Activated CD4-positive, alpha-beta T cell treated with anti-CD3 and anti-CD28 coated beads for 36 hours (primary cell): ENCODE measurements at regions of chr2 and their contacts with region 1.

Region 1: DNA sequence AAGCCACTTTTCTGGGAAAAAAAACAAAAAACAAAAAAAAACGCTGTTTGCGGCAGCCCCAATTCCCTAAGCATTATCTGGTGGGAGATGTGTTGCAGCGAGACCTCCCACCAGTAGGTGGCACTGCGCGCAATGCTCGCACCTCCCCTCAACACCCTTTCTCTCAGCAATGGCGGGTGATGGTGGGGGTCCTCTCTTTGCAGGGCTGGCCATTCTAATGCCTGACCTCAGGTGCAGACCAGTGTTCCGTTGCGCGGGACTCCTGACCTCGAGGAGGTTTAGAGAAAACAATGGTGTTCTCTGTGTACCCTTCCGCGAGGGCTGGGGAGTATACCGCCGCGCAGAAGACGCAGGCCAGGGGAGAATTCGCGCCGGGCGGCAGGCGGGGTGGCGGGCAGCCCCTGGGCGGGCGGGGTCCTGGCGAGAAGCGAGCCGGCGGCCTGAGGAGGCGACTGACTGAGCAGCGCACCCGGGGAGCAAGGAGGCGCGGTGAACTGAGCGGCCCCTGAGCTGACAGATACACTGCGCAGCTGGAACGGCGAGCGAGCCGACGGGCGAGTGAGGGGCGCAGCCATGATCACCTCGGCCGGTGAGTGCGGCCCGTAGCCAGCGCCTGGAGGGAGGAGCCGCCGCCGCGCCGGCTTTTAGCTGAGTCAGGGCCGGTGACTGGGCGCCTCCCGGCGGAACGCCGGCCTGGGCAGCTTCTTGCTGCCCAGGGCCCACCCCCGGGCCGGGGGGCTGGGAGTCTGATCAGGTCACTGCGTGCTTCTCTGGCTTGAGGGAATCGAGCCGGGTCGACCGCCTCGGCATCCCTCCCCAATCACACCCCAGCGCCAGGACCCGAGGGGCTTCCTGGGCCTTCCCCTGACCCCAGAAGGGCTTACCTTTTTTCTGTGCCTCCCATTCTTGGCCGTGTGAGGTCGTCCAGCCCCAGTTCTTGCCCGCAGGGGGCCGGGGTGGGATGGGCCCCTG is at the start of gene PSMD1:
- DNase-seq: peak; percentile 96
- ATAC-seq: peak; percentile 77
- H3K4me3 Mint-ChIP-seq: peak within 1 kb of the TSS; percentile 80
- H3K27ac Mint-ChIP-seq: peak within 1 kb of the TSS; percentile 100
- H3K4me1 Mint-ChIP-seq: peaks cover 51% of the 10 kb centered on the region
- H3K27me3 Mint-ChIP-seq: peaks cover 2% of the 10 kb centered on the region
- total RNA-seq, gene PSMD1: 112 to 160 TPM

Region 2: DNA sequence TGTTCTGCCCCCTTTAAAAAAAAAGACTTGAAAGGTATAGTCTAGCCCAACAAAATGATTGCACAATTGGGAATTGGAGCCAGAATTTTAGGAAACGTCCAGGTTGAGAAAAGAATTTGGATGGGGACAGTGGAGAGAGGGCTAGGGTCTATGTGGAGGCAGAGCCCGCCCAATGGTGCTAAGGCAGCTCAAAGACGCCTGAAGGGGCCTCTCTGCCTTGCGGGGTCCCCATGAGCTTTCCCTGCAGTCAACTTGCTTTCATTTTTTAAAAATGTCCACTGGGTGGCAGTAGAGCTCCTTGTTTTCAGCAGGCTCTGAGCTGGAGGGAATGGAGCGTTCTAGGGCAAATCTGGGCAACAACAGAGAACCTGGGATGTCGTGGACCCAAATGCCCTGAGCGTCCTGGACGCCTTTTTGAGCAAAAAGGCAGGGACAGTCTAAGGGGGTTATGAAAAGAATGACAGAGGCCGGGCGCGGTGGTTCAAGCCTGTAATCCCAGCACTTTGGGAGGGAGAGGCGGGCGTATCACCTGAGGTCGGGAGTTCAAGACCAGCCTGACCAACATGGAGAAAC is 232.2 kb before region 1 on chr2:
- CTCF ChIA-PET with region 1: interaction called, 13 read pairs
- POLR2A ChIA-PET with region 1: interaction called, 3 read pairs
- intact Hi-C with region 1: loop called (anchors 1 to 2 kb)
- DNase-seq: peak; percentile 62
- ATAC-seq: peak; percentile 87
- H3K4me3 Mint-ChIP-seq: peak overlapping the region; percentile 44
- H3K27ac Mint-ChIP-seq: no peak overlapping the region
- H3K4me1 Mint-ChIP-seq: peaks cover 5% of the 10 kb centered on the region
- H3K27me3 Mint-ChIP-seq: peaks cover 28% of the 10 kb centered on the region

Region 3: DNA sequence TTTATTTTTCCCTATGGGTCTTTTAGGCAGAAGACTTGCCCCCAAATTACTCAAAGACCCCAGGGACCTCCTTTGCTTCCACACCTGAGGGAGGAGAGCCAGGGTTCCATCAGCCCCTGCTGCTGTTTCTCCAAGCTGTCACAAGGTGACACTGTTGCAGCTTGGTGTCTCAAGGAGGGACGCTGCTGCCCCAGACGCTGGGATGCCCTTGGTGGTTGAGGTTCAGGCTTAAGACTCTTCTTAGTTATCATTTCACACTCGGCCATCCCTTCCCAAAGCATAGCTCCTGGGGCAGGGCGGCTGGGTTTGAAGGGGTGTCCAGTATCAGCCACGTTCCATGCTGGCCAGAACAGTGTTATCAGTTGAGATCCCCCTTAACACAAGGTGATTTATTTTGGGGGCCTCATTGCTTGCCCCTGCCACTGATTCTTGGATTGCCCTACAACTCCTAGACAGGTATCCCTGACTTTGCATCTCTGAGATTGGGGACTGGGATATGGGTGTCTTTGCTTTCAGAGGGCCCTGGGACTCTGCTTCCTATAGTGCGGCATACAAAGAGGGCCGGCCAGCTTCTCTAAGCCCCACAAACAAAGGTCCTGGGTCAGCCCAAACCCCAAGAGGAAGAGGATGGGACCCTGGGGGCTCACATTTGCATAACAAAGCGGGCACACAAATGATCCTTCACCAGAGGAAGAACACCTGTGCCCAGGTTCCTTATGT is 154.4 kb before region 1 on chr2:
- CTCF ChIA-PET with region 1: interaction called, 6 read pairs
- POLR2A ChIA-PET with region 1: no interaction called
- intact Hi-C with region 1: loop called (anchors 1 to 2 kb)
- DNase-seq: peak; percentile 81
- ATAC-seq: peak; percentile 43
- H3K4me3 Mint-ChIP-seq: no peak overlapping the region
- H3K27ac Mint-ChIP-seq: no peak overlapping the region
- H3K4me1 Mint-ChIP-seq: peaks cover 56% of the 10 kb centered on the region
- H3K27me3 Mint-ChIP-seq: peaks cover 12% of the 10 kb centered on the region

Region 4: GRCh38 chr2:231038483-231039293 is 18.1 kb before region 1 on chr2:
- CTCF ChIA-PET with region 1: interaction called, 14 read pairs
- POLR2A ChIA-PET with region 1: no interaction called
- intact Hi-C with region 1: no loop called
- DNase-seq: no peak
- ATAC-seq: no peak
- H3K4me3 Mint-ChIP-seq: peak overlapping the region; percentile 43
- H3K27ac Mint-ChIP-seq: no peak overlapping the region
- H3K4me1 Mint-ChIP-seq: no peaks in the 10 kb centered on the region
- H3K27me3 Mint-ChIP-seq: peaks cover 48% of the 10 kb centered on the region

Region 5: GRCh38 chr2:231514103-231514950 is 457.6 kb after region 1 on chr2:
- CTCF ChIA-PET with region 1: no interaction called
- POLR2A ChIA-PET with region 1: no interaction called
- intact Hi-C with region 1: loop called in 1 of 2 experiments (anchors 1 kb)
- DNase-seq: peak; percentile 99
- ATAC-seq: peak; percentile 99
- H3K4me3 Mint-ChIP-seq: peak overlapping the region; percentile 83
- H3K27ac Mint-ChIP-seq: peak overlapping the region; percentile 95
- H3K4me1 Mint-ChIP-seq: peaks cover 13% of the 10 kb centered on the region
- H3K27me3 Mint-ChIP-seq: no peaks in the 10 kb centered on the region

Region 6: DNA sequence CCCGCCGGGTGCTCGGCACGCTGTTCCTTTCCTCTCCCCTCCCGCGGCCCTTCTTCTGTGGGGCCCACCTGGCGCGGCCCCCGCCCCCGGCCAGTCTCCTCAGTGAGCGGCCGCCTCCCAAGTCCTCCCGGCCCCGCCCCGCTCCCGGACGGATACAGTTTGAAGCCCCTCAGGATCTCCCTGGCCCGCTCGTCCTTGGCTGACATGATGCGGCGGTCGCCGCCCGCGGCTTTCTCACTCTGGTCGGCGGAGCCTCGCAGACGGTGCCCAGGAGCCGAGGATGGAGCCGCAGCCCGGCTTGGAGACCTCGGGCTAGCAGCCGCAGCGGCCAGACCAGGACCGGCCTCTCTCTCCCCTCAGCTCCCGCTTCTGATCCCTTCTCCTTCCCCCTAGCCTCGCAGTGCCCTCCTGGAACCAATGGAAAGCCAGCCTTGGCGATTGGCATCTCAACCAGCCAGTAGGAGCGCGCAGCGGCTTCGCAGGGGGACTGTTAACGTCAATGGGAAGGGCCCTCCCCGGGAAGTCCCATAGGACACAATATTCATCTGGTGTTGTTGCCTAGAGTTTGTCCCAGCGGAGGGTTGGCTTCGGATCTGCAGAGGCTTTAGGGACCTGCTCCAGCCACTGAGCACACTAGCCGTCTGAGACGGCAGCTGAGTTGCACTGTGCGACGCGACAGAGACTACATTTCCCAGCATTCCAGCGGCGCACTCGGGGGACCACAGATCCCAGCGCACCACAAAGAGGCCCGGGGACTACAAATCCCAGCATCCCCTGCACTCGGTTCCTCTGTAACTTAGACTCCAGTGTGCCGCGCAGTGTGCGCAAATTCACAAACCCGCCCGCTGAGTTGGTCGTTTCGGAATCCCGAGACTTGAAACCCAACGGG is 724.4 kb after region 1 on chr2 and contains the start of gene PDE6D:
- CTCF ChIA-PET with region 1: no interaction called
- POLR2A ChIA-PET with region 1: no interaction called
- intact Hi-C with region 1: loop called in 1 of 2 experiments (anchors 1 kb)
- DNase-seq: peak; percentile 97
- ATAC-seq: peak; percentile 93
- H3K4me3 Mint-ChIP-seq: peak within 1 kb of the TSS; percentile 83
- H3K27ac Mint-ChIP-seq: peak within 1 kb of the TSS; percentile 92
- H3K4me1 Mint-ChIP-seq: peaks cover 44% of the 10 kb centered on the region
- H3K27me3 Mint-ChIP-seq: no peaks in the 10 kb centered on the region
- total RNA-seq, gene PDE6D: 28.0 to 31.1 TPM